MCF 10A (cell line): ENCODE measurements at regions of chr1 and their contacts with region 1.

Region 1: DNA sequence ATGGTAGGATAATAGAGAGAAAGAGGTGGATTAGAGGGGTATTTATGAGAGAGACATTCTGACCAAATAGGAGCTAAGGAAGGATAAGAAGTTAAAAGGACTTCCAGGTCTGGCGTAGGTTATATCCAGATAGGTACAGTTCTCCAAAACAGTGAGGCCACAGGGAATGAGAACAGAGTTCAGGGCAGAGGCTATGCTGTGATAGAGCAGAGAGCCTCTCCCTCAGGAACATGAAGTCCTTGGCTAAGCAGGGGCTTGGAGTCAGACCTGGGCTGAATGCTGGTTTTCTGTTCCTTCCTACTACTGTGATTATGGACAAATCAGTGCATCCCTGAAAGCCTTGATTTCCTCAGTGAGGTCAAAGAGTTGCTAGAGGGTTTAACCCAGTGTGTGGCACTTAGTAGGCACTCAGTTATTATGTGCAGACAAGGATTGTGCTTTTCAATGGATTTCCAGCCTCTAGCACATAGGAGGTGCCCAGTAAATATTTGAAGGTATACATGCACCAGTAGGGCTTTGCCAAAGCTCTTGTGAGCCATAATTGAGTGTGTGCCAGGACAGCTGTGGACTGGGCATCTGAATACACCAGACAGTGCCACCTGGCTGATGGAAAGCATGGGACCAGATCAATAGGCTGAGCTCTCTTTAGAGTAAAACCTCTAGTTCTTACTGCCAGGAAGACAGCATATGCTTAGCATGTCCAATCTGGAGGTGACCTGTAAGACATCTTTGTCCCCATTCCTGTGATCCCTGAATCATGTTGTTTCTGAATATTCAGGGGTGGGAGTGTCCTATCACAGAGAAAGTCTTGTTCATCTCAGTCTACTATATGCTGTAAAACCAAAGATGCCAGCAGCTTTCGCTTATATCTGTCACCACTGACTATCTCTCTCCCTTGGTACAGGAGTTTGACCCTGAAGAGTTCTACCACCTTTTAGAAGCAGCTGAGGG is 111.1 kb downstream of the PIK3R3 start:
- DNase-seq: peak; percentile 22
- H3K4me3 Mint-ChIP-seq: no peak overlapping the region
- H3K27ac Mint-ChIP-seq: no peak overlapping the region
- H3K4me1 Mint-ChIP-seq: no peaks in the 10 kb centered on the region
- H3K27me3 Mint-ChIP-seq: no peaks in the 10 kb centered on the region
- CTCF ChIP-seq: no peak

Region 2: GRCh38 chr1:45722809-45723208 is 298.5 kb before region 1 on chr1:
- CTCF ChIA-PET with region 1: no interaction called
- POLR2A ChIA-PET with region 1: no interaction called
- intact Hi-C with region 1: no loop called
- DNase-seq: peak; percentile 4
- H3K4me3 Mint-ChIP-seq: no peak overlapping the region
- H3K27ac Mint-ChIP-seq: no peak overlapping the region
- H3K4me1 Mint-ChIP-seq: peaks cover 6% of the 10 kb centered on the region
- H3K27me3 Mint-ChIP-seq: no peaks in the 10 kb centered on the region
- CTCF ChIP-seq: no peak

Region 3: DNA sequence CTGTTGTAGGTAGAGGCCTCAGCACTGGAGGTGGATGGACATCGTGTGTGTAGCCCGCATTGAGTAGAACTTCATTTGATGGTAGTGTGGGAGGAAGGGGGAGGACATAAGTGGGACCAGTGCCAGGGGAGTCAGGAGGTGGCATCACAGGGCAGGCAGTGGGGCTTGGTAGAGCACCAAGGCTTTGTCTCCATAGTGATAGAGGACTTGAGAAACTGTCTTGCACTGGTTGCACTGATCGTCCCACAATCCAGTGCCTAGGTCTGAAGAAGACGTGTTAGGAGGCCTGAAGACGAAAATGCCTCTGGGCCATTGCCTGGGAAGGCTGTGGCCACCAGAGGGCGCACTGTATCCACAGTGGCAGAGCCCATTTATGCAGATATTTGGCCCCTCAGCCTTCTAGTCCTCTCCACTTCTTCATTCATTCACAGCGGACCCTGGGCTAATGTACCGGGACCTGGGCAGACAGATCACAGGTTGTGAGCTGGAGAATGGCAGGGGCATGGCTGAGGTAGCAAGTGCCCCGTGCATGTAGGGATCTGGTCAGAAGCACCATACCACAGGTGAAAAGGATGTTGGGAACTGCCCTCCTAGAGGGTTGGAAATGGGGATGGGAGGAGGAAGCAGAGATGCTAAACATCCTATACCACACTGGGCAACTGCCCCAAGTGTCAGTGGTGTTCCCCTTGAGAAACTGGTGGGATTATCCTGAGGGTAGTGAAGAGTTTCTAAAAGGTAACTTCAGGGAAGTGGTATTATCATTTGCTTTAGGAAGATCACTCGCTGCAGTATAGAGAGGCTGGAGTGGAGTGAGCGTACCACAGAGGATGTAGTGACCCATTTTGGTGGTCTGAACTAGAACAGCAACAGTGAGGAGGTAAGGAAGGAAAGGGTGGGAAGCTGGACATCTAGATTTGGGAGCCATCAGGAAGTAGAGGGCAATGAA is 15.8 kb after region 1 on chr1:
- CTCF ChIA-PET with region 1: interaction called, 12 read pairs
- POLR2A ChIA-PET with region 1: no interaction called
- intact Hi-C with region 1: no loop called
- DNase-seq: peak; percentile 83
- H3K4me3 Mint-ChIP-seq: no peak overlapping the region
- H3K27ac Mint-ChIP-seq: no peak overlapping the region
- H3K4me1 Mint-ChIP-seq: no peaks in the 10 kb centered on the region
- H3K27me3 Mint-ChIP-seq: no peaks in the 10 kb centered on the region
- CTCF ChIP-seq: peak; percentile 97